Activated CD4-positive, alpha-beta T cell treated with anti-CD3 and anti-CD28 coated beads, Interleukin-2, amount 10 ng/mL, durations not matched to agents 24 days and 14 days (primary cell): ENCODE measurements at regions of chr6 and their contacts with region 1.

Region 1: DNA sequence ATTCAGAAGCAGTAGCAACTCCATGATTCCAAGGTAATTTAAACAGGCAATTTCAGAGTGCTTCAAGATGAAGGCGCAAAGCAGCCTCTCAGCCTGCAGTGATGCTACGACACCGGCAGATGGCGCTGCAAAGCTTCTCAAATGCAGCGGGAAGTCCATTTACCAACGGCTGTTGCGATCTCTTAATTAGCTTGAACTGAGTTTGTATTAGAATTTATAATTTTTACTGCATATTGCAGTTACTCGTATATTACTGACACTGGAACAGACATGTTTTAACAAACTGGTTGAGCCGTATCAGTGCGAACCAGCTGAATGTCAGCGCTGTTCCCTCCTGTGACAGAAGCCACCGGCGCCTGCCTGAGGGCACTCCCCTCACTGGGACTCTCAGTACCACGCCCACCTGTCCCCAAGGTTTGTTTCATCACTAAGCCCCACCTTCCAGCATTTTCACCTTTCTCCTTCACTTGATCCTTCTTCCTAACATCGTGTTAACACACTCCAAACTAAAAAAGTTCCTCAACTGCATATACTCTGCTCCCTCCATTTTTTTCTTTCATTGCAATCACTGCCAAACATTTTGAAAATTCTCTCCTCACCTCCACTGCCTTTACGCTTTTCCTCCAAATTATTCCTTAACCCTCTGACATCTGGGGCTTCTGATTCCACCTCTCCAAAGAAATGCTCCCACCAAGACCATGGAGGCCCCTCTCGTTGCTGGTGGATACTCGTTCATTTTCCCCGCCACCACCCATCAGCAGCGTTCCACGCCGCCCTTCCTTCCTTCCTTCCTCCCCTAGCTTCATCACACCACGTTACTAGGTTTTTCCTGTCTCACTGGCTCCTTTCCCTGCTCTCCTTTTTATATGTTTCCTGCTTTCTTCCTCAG is 14.5 kb downstream of the GNL1 start:
- DNase-seq: peak; percentile 94
- H3K4me3 Mint-ChIP-seq: peak overlapping the region; percentile 79
- H3K27ac Mint-ChIP-seq: peak overlapping the region; percentile 31
- H3K4me1 Mint-ChIP-seq: peaks cover 34% of the 10 kb centered on the region
- H3K27me3 Mint-ChIP-seq: no peaks in the 10 kb centered on the region

Region 2: GRCh38 chr6:29995340-29995777 is 546.4 kb before region 1 on chr6:
- intact Hi-C with region 1: no loop called
- DNase-seq: no peak
- H3K4me3 Mint-ChIP-seq: no peak overlapping the region
- H3K27ac Mint-ChIP-seq: no peak overlapping the region
- H3K4me1 Mint-ChIP-seq: peaks cover 3% of the 10 kb centered on the region
- H3K27me3 Mint-ChIP-seq: peaks cover 34% of the 10 kb centered on the region

Region 3: GRCh38 chr6:30515932-30516753 is 25.6 kb before region 1 on chr6:
- intact Hi-C with region 1: no loop called
- DNase-seq: peak; percentile 97
- H3K4me3 Mint-ChIP-seq: peak overlapping the region; percentile 83
- H3K27ac Mint-ChIP-seq: peak overlapping the region; percentile 97
- H3K4me1 Mint-ChIP-seq: peaks cover 44% of the 10 kb centered on the region
- H3K27me3 Mint-ChIP-seq: no peaks in the 10 kb centered on the region

Region 4: DNA sequence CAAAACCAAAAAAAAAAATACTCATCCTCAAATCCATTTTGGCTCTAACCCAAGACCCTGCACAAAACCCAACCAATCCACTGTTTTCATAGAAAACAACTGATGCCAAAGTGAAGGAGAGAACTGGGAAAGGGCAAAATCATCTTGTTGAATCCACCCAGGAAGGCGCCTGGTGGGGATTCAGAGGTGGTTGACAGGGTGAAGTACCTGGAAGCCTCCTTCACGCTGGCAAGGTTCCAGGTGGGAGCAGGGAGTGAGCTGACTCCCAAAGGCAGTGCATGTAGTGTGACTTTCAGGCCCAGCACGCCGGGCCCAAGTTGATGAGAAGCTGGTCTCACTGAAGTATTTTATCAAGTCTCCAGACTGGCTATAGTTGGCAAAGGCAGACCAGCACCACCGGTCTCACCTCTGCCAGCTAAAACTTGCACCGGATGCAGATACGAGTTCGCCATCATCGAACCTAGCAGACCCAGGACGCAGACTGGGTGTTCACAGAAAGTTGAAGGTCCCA is 58.7 kb after region 1 on chr6:
- intact Hi-C with region 1: loop called (anchors 5 kb)
- DNase-seq: no peak
- H3K4me3 Mint-ChIP-seq: no peak overlapping the region
- H3K27ac Mint-ChIP-seq: peak overlapping the region; percentile 9
- H3K4me1 Mint-ChIP-seq: peaks cover 16% of the 10 kb centered on the region
- H3K27me3 Mint-ChIP-seq: no peaks in the 10 kb centered on the region

Region 5: GRCh38 chr6:30781743-30782424 is 240.1 kb after region 1 on chr6:
- intact Hi-C with region 1: no loop called
- DNase-seq: peak; percentile 73
- H3K4me3 Mint-ChIP-seq: peak overlapping the region; percentile 57
- H3K27ac Mint-ChIP-seq: peak overlapping the region; percentile 94
- H3K4me1 Mint-ChIP-seq: peaks cover 69% of the 10 kb centered on the region
- H3K27me3 Mint-ChIP-seq: no peaks in the 10 kb centered on the region

Region 6: GRCh38 chr6:30814136-30815040 is 272.6 kb after region 1 on chr6:
- intact Hi-C with region 1: no loop called
- DNase-seq: peak; percentile 85
- H3K4me3 Mint-ChIP-seq: peak overlapping the region; percentile 67
- H3K27ac Mint-ChIP-seq: peak overlapping the region; percentile 98
- H3K4me1 Mint-ChIP-seq: peaks cover 75% of the 10 kb centered on the region
- H3K27me3 Mint-ChIP-seq: peaks cover 2% of the 10 kb centered on the region

Region 7: GRCh38 chr6:31087494-31088089 is 545.8 kb after region 1 on chr6:
- intact Hi-C with region 1: loop called (anchors 5 kb)
- DNase-seq: peak; percentile 96
- H3K4me3 Mint-ChIP-seq: no peak overlapping the region
- H3K27ac Mint-ChIP-seq: no peak overlapping the region
- H3K4me1 Mint-ChIP-seq: peaks cover 11% of the 10 kb centered on the region
- H3K27me3 Mint-ChIP-seq: peaks cover 16% of the 10 kb centered on the region